ENCODE measurements at regions of chr1 and their contacts with region 1.

Region 1: GRCh38 chr1:224113918-224114786 is at the start of gene FBXO28:
- DNase-seq: peak; percentile 93 to 97
- H3K4me3 ChIP-seq: peak within 1 kb of the TSS; percentile 77 to 97
- H3K27ac ChIP-seq: peak within 1 kb of the TSS; percentile 92 to 96
- H3K4me1 ChIP-seq: peaks cover 0 to 13% of the 10 kb centered on the region in 2 donors
- H3K27me3 ChIP-seq: no peaks in the 10 kb centered on the region
- CTCF ChIP-seq: no peak
- POLR2A ChIP-seq: peak; percentile 85 to 87
- total RNA-seq, gene FBXO28: 10.5 to 49.1 (median 21.8) TPM

Region 2: GRCh38 chr1:223776075-223776814 is 337.9 kb before region 1 on chr1:
- intact Hi-C with region 1: no loop called
- DNase-seq: no peak
- H3K4me3 ChIP-seq: no peak overlapping the region
- H3K27ac ChIP-seq: peak overlapping the region; percentile 3 to 40
- H3K4me1 ChIP-seq: peaks cover 0 to 4% of the 10 kb centered on the region in 2 donors
- H3K27me3 ChIP-seq: no peaks in the 10 kb centered on the region
- CTCF ChIP-seq: no peak
- POLR2A ChIP-seq: no peak

Region 3: DNA sequence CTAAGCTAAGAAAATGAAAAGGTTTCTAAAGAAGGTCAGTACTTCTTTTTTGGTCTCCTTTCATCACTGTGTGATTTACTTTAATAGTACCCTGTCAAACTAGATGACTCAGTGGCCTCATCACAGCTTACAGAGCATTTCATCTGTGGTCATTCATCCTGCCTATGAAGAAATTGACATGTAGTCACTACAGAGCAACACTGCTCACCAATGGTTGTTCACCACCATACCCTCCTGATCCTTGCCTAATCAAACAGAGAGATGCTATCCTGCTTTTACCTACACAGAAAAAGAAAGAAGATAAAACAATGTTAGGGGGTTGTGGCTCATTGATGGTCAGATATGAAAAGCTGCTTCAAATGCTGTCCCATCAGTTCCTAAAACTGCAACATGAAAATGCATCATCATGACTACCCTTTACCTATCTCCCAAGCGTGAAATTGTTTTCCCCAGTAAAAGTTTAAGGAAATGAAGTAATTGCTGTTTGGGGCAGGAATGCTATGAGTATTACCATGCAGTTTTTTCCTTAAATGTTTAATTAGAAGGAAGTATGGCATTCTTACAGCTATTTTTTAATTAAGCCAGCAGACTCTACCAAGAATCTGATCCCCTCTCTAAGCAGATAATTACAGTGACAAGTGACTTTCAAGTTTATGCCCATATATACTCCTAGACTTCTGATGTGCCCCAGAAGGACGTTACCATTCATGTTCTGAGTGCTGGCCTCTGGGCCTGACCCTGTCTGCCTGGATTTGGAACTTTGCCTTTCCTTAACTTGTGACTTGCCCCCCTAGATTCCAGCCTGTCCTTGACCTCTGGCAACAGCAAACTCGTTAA is 46.3 kb before region 1 on chr1:
- intact Hi-C with region 1: no loop called
- DNase-seq: no peak
- H3K4me3 ChIP-seq: no peak overlapping the region
- H3K27ac ChIP-seq: no peak overlapping the region
- H3K4me1 ChIP-seq: no peaks in the 10 kb centered on the region
- H3K27me3 ChIP-seq: no peaks in the 10 kb centered on the region
- CTCF ChIP-seq: no peak
- POLR2A ChIP-seq: no peak

Region 4: DNA sequence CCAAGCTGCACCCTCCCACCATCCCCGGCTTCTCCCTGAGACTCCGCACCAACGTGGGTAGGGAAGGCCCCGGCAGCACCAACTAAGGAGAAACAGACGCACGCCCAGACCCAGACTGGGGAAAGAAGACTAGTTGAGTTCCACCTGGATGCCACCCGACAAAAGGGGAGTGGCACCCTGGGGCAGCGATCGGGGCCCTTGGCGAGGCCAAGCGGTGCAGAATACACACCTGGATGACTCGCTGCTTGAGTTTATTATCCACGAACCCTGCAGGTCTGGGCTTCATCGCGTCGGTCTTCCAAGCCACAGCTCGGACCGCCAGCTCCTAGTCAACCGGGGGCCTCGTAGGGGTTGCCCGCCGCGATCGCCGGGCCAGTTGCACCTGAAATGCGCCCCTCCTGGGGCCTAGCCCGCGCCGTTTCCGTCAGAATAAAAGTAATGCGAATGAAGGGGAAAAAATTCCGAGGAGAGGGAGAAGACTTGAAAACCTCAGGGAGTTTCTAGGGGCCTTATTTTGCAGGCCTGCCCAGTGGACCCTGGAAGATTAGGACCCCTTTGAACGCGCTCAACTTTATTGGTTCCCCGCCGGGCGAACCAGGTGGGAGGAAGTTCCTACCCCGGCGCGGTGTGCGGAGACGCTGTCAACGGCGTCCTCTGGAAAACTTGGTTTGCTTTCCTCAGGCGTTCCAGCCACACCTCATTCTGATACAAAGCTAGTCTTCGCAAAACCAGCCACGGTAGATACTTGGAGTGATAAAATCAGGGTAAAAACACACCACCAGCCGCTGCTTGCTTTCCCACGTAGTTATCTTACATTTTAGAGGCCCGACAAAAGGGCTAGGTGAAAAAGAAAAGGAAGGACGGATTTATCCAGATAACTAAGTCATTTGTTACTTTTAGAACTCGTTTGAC is 215.9 kb after region 1 on chr1 and contains the start of gene NVL:
- intact Hi-C with region 1: loop called (anchors 10 kb)
- DNase-seq: peak; percentile 81 to 84
- H3K4me3 ChIP-seq: peak within 1 kb of the TSS; percentile 53 to 74
- H3K27ac ChIP-seq: peak within 1 kb of the TSS; percentile 86 to 97
- H3K4me1 ChIP-seq: peaks cover 0 to 7% of the 10 kb centered on the region in 2 donors
- H3K27me3 ChIP-seq: no peaks in the 10 kb centered on the region
- CTCF ChIP-seq: peak in 1 of 4 experiments; percentile 33
- POLR2A ChIP-seq: peak in 1 of 2 donors; percentile 31
- total RNA-seq, gene NVL: 2.6 to 45.2 (median 28.9) TPM

Region 5: GRCh38 chr1:224689374-224689773 is 575.2 kb after region 1 on chr1:
- intact Hi-C with region 1: no loop called
- DNase-seq: no peak
- H3K4me3 ChIP-seq: no peak overlapping the region
- H3K27ac ChIP-seq: no peak overlapping the region
- H3K4me1 ChIP-seq: no peaks in the 10 kb centered on the region
- H3K27me3 ChIP-seq: no peaks in the 10 kb centered on the region
- CTCF ChIP-seq: no peak
- POLR2A ChIP-seq: no peak

Measured in uterus (tissue), 4 donors.